Activated T-helper 1 cell treated with anti-CD3 and anti-CD28 coated beads, Interleukin-12 subunit alpha, Interleukin-12 subunit beta, Interleukin-2, Interleukin-4 antibody, amounts not matched to agents 30 ng/mL and 10 ng/mL and 1 ng/mL, durations not matched to agents 14 hours and 24 hours and 36 hours (primary cell): ENCODE measurements at regions of chr11 and their contacts with region 1.

Region 1: DNA sequence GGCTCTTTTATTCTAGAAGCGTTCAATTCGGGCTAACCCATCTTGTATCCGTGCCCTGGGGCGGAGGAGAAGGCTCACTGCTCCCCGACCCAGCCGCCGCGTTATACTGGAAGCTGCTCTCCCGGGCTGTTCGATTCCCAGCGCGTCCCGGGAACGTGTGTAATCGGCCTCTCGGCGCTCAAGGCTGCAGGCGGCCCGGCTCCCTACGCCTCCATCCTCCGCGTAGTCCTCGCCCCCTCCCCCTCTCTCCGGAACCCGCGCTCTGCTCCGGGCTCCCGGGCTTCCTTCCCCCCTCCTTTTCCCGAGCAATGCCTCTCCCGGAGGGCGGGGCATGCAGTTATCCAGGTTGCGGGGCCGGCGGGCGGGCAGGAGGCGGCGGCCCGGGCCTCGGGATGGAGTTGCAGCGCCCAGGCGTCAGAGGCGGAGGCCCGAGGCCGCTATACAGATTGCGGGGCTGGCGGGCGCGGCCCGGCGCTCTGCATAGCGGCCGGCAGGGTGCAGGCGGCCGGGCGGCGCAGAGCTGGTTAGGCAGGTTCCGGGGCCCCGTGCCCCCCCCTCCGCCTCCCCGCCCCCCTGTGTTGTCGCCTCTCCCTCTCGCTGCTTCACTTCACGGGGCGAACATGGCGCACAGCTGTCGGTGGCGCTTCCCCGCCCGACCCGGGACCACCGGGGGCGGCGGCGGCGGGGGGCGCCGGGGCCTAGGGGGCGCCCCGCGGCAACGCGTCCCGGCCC is at the start of gene KMT2A:
- DNase-seq: peak; percentile 92
- H3K4me3 Mint-ChIP-seq: peak within 1 kb of the TSS; percentile 91
- H3K27ac Mint-ChIP-seq: peak within 1 kb of the TSS; percentile 89
- H3K4me1 Mint-ChIP-seq: peaks cover 45% of the 10 kb centered on the region
- H3K27me3 Mint-ChIP-seq: peaks cover 3% of the 10 kb centered on the region
- total RNA-seq, gene KMT2A: 78.4 and 87.8 TPM in 2 replicates

Region 2: DNA sequence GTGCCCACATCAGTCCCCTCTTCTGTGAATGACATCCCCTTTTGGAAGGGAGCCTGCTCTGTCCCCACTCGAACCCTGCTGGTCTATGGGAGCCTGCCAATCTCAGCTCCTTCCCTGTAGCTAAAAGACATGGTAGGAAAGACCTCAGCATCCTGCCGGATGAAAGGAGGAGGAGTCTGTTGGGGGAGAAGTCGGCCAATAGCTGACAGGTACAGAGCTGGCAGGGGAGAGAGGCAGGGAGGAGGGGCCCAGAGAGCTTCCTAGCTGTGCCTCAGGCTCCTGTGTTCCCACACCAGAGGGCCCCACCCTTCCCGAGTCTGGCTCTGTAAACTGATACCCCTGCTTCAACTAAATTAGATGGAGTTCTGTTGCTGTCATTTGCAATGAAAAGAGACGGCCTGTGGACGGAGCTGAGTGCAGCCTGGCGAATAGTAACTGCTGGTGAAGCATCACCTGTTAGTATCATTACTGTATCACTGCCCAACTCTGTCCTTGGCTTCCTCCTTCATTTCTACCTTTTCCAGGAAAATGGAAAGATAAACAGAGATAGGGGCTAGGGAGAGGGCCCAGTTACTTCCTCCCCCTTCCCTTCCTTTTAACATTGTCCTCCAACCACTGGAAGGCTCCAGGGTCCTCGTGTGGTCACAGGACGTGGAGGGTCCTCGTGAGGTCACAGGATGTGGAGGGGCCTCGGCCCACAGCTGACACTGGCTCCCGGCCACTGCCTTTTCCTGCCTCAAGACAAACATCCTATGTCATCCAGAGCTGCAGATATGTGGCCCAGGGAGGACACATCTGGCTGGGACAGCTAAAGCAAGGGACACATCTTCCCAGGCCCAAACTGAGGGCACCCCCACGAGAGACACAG is 574.7 kb before region 1 on chr11:
- intact Hi-C with region 1: no loop called
- DNase-seq: no peak
- H3K4me3 Mint-ChIP-seq: no peak overlapping the region
- H3K27ac Mint-ChIP-seq: peak overlapping the region; percentile 20
- H3K4me1 Mint-ChIP-seq: peaks cover 5% of the 10 kb centered on the region
- H3K27me3 Mint-ChIP-seq: peaks cover 35% of the 10 kb centered on the region

Region 3: GRCh38 chr11:118240999-118241768 is 194.9 kb before region 1 on chr11:
- intact Hi-C with region 1: loop called (anchors 5 kb)
- DNase-seq: peak; percentile 66
- H3K4me3 Mint-ChIP-seq: peak overlapping the region; percentile 83
- H3K27ac Mint-ChIP-seq: peak overlapping the region; percentile 99
- H3K4me1 Mint-ChIP-seq: peaks cover 89% of the 10 kb centered on the region
- H3K27me3 Mint-ChIP-seq: no peaks in the 10 kb centered on the region

Region 4: GRCh38 chr11:118338637-118339061 is 97.4 kb before region 1 on chr11:
- intact Hi-C with region 1: loop called (anchors 2 kb)
- DNase-seq: peak; percentile 86
- H3K4me3 Mint-ChIP-seq: peak overlapping the region; percentile 90
- H3K27ac Mint-ChIP-seq: peak overlapping the region; percentile 99
- H3K4me1 Mint-ChIP-seq: peaks cover 68% of the 10 kb centered on the region
- H3K27me3 Mint-ChIP-seq: no peaks in the 10 kb centered on the region

Region 5: DNA sequence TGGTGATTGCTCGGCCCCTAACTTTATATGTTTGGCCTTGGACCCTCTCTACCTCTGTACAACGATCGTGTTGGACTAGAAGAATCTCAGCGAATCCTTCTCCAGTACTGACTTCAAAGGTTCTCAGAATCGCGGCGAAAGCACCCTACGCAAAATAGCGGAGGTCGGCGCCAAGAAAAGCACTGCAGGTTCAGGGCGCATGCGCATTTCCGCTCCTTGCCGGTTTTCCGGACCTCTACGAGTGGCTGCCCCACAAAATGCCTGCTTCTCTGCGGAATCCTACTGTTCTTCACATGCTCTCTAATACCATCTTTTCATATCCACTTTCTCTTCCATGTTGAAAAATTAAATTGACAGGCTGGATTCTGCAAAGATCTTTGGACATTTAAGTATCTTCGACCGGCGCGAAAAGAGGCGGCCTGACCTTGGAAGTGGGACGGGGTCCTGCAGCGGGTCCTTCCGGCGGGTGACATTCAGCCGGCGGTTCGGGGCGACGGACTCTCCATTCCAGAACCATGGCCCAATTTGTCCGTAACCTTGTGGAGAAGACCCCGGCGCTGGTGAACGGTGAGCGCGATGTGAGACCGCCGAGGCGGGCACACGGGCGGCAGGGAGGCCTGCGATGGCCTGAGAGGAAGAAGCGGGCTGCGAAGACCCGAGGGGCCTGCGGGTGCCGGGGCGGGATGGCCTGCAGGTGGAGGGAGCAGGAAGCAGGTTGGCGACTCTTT is 34.7 kb before region 1 on chr11 and contains the start of gene ATP5MG:
- intact Hi-C with region 1: loop called (anchors 1 kb)
- DNase-seq: peak; percentile 87
- H3K4me3 Mint-ChIP-seq: peak within 1 kb of the TSS; percentile 93
- H3K27ac Mint-ChIP-seq: peak within 1 kb of the TSS; percentile 96
- H3K4me1 Mint-ChIP-seq: peaks cover 68% of the 10 kb centered on the region
- H3K27me3 Mint-ChIP-seq: no peaks in the 10 kb centered on the region
- total RNA-seq, gene ATP5MG: 205 and 216 TPM in 2 replicates

Region 6: GRCh38 chr11:118448294-118448693 is 12.2 kb after region 1 on chr11:
- intact Hi-C with region 1: loop called (anchors 1 kb)
- DNase-seq: no peak
- H3K4me3 Mint-ChIP-seq: peak overlapping the region; percentile 6
- H3K27ac Mint-ChIP-seq: peak overlapping the region; percentile 22
- H3K4me1 Mint-ChIP-seq: peaks cover 73% of the 10 kb centered on the region
- H3K27me3 Mint-ChIP-seq: no peaks in the 10 kb centered on the region

Region 7: DNA sequence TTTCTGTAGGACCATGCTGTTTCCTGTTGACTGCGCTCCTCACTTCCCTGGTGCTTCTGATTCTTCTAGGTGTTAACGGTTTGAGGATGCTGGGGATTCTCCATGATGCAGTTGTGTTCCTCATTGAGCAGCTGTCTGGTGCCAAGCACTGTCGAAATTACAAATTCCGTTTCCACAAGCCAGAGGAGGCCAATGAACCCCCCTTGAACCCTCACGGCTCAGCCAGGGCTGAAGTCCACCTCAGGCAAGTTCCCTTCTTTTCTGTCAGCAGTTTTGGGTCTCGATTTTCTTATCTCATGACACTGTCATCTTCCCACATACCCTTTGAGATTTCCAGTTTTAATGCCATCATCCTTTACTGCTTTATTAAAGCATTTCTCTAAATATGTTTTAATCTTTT is 83.5 kb after region 1 on chr11:
- intact Hi-C with region 1: no loop called
- DNase-seq: no peak
- H3K4me3 Mint-ChIP-seq: no peak overlapping the region
- H3K27ac Mint-ChIP-seq: no peak overlapping the region
- H3K4me1 Mint-ChIP-seq: no peaks in the 10 kb centered on the region
- H3K27me3 Mint-ChIP-seq: no peaks in the 10 kb centered on the region

Region 8: GRCh38 chr11:118530408-118531339 is 94.6 kb after region 1 on chr11 and contains the start of gene TMEM25:
- intact Hi-C with region 1: loop called (anchors 1 kb)
- DNase-seq: peak; percentile 71
- H3K4me3 Mint-ChIP-seq: peak within 1 kb of the TSS; percentile 89
- H3K27ac Mint-ChIP-seq: peak within 1 kb of the TSS; percentile 88
- H3K4me1 Mint-ChIP-seq: peaks cover 21% of the 10 kb centered on the region
- H3K27me3 Mint-ChIP-seq: no peaks in the 10 kb centered on the region
- total RNA-seq, gene TMEM25: 13.6 and 15.0 TPM in 2 replicates

Region 9: GRCh38 chr11:118878163-118878563 is 442.1 kb after region 1 on chr11:
- intact Hi-C with region 1: loop called (anchors 5 kb)
- DNase-seq: no peak
- H3K4me3 Mint-ChIP-seq: no peak overlapping the region
- H3K27ac Mint-ChIP-seq: peak overlapping the region; percentile 95
- H3K4me1 Mint-ChIP-seq: peaks cover 82% of the 10 kb centered on the region
- H3K27me3 Mint-ChIP-seq: no peaks in the 10 kb centered on the region